Heart left ventricle (tissue), 16 donors: ENCODE measurements at regions of chr20 and their contacts with region 1.

Region 1: DNA sequence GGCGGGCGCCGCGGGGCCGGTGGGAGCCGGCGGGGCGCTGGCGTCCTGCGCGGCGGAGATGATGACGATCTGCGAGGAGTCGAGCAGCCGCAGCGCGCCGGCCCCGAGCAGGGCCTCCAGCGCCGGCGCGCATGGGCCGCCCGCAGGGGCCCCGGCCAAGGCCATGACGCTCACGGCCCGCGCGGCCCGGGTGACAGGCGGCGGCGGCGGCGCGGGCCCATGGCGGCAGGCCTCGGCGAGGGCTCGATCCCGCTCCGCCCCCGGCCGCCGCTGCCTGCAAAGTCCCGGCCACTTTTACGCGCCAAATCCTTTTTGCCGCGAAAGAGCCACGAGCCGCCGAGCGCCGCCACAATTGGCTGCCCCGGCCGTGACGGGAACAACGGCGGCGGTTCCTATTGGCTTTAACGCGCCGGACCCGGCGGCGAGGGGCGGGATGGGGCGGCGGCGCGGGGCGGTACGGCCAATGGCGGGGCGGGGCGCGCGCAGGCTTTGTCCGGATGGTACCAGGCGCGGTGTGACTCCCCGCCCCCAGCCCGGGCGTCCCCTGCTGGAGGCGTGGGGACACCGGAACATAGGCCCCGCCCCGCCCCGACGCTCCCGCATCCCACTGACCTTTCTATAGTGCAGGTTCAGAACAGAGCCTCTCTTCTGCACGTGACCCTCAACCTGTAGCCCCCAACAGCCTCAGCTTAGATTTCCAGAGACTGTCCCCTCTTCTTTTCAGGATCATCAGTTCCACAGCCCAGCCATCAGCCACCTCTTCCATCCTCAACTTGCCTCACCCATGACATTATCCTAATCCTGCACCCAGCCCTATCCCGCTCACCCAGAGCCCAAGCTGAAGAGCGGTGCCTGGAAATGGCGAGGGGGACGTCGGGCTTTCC is at the start of gene E2F1:
- DNase-seq: peak; percentile 97 to 98 (median 97)
- ATAC-seq: peak; percentile 97 to 99 (median 99)
- H3K4me3 ChIP-seq: peak within 1 kb of the TSS in 10 of 12 donors; percentile 24 to 73 (median 42)
- H3K27ac ChIP-seq: peak within 1 kb of the TSS in 7 of 12 donors; percentile 12 to 70 (median 17)
- H3K4me1 ChIP-seq: peaks cover 0 to 35% (median 14%) of the 10 kb centered on the region in 12 donors
- H3K27me3 ChIP-seq: no peaks in the 10 kb centered on the region
- CTCF ChIP-seq: peak in 10 of 12 donors; percentile 29 to 72 (median 47)
- POLR2A ChIP-seq: peak in 1 of 2 donors; percentile 20
- total RNA-seq, gene E2F1: 0.32 to 6.4 (median 1.4) TPM

Region 2: GRCh38 chr20:33719989-33720709 is 33.8 kb after region 1 on chr20 and contains the start of gene PXMP4:
- intact Hi-C with region 1: loop called in 4 of 10 experiments (anchors 5 kb)
- DNase-seq: peak; percentile 90 to 95 (median 94)
- ATAC-seq: peak; percentile 99 to 100 (median 100)
- H3K4me3 ChIP-seq: peak within 1 kb of the TSS; percentile 63 to 100 (median 86)
- H3K27ac ChIP-seq: peak within 1 kb of the TSS in 11 of 12 donors; percentile 46 to 85 (median 76)
- H3K4me1 ChIP-seq: peaks cover 0 to 16% (median 9%) of the 10 kb centered on the region in 12 donors
- H3K27me3 ChIP-seq: no peaks in the 10 kb centered on the region
- CTCF ChIP-seq: no peak
- POLR2A ChIP-seq: peak in 1 of 2 donors; percentile 40
- total RNA-seq, gene PXMP4: 8.2 to 13.0 (median 11.9) TPM

Region 3: DNA sequence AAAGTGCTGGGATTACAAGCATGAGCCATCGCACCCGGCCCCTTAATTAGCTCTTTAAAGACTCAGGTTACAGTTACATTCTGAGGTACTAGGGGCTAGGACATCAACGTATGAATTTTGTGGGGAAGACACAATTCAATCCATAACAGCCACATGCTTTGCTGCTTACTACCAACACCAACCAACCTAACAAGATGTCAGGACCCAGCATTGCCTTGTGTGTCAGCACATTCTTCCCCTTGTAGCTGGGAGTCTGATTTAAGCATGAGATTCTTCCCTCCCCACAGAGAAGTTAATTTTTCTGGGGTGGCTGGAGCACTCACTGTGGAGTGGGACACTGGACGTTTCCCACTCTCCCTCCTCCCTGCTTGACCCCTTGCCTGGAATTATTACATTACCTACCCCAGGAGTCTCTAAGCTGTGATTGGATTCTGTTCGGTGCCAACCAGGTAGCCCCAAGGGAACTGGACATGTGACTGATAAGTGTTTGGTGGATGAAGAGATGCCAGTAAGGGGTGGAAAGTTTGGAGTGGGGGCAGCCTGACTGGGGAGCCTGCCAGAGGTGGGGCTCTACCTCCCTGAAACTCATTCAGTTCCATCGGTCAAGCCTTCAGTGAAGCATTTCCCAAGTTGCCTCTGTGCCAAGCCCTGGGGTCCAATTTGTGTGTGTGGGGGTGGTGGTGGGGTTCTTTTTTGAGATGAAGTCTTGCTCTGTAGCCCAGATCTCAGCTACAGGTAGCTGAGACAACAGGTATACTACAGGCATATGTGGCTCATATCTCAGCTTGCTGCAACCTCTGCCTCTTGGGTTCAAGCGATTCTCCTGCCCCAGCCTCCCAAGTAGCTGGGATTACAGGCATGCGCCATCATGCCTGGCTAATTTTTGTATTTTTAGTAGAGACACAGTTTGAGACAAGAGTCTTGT is 39.6 kb after region 1 on chr20:
- intact Hi-C with region 1: loop called in 4 of 10 experiments (anchors 5 kb)
- DNase-seq: no peak
- ATAC-seq: no peak
- H3K4me3 ChIP-seq: no peak overlapping the region
- H3K27ac ChIP-seq: no peak overlapping the region
- H3K4me1 ChIP-seq: peaks cover 0 to under 1% (median 0%) of the 10 kb centered on the region in 12 donors
- H3K27me3 ChIP-seq: no peaks in the 10 kb centered on the region
- CTCF ChIP-seq: no peak
- POLR2A ChIP-seq: no peak